MCF 10A (cell line): ENCODE measurements at regions of chr11 and their contacts with region 1.

Region 1: DNA sequence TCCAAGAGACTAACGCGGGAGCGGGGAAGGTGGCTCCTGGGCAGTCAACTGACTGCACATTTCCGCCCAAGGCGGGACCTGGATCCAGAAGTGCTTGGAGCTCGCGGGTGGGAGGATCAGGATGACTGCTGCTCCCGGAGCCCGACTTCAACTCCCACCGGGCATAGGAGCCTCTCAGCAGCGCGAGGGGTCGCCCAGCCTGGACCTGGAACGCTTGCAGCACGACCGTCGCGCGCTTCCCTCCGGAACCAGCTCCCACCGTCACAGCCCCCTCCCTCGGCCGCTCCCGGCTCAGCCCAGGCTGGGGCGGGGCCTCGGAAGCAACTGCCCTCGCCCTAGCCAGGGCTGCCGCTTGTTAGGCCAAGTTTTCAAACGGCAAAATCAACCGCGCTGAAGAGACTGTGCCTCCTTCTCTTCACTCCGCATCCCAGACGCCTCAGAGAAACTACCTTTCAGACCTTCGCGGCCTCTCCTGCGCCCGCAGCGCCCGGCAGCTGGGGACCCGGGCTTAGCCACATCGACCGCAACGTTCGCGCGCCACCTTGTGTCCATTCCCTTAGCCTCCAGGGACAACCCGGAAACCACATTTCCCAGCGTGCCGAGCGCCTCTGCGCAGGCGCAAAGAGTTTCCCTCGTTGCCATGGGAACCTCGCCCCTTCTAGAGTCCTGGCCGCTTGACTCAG is 14.0 kb downstream of the SSH3 start:
- DNase-seq: peak; percentile 97
- H3K4me3 Mint-ChIP-seq: peak overlapping the region; percentile 99
- H3K27ac Mint-ChIP-seq: peak overlapping the region; percentile 93
- H3K4me1 Mint-ChIP-seq: peaks cover 28% of the 10 kb centered on the region
- H3K27me3 Mint-ChIP-seq: no peaks in the 10 kb centered on the region
- CTCF ChIP-seq: peak; percentile 87

Region 2: GRCh38 chr11:67213178-67213621 is 104.1 kb before region 1 on chr11:
- CTCF ChIA-PET with region 1: no interaction called
- POLR2A ChIA-PET with region 1: no interaction called
- intact Hi-C with region 1: no loop called
- DNase-seq: no peak
- H3K4me3 Mint-ChIP-seq: no peak overlapping the region
- H3K27ac Mint-ChIP-seq: no peak overlapping the region
- H3K4me1 Mint-ChIP-seq: no peaks in the 10 kb centered on the region
- H3K27me3 Mint-ChIP-seq: no peaks in the 10 kb centered on the region
- CTCF ChIP-seq: no peak

Region 3: DNA sequence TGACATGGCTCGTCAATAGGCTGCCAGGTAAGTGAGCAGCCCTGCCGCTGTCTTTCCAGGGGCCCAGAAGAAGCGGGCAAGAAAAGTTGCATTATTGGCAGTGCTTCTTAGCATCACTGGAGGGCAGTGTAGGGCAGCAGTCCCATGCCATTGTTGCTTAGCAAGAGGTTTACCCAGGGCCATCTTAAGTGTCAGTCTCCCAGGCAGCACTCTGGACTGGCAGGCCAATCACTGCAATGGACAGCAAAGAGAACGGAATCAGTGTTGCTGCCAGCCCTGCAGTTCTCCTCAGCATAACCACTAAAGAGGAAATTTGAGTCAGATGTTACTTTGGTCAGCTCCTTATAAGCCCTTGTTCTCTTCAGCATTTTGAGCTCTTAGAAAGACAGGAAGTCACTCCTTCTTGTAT is 64.5 kb before region 1 on chr11:
- CTCF ChIA-PET with region 1: interaction called, 23 read pairs
- POLR2A ChIA-PET with region 1: interaction called, 3 read pairs
- intact Hi-C with region 1: no loop called
- DNase-seq: peak; percentile 46
- H3K4me3 Mint-ChIP-seq: no peak overlapping the region
- H3K27ac Mint-ChIP-seq: peak overlapping the region; percentile 37
- H3K4me1 Mint-ChIP-seq: peaks cover 15% of the 10 kb centered on the region
- H3K27me3 Mint-ChIP-seq: no peaks in the 10 kb centered on the region
- CTCF ChIP-seq: peak; percentile 18

Region 4: DNA sequence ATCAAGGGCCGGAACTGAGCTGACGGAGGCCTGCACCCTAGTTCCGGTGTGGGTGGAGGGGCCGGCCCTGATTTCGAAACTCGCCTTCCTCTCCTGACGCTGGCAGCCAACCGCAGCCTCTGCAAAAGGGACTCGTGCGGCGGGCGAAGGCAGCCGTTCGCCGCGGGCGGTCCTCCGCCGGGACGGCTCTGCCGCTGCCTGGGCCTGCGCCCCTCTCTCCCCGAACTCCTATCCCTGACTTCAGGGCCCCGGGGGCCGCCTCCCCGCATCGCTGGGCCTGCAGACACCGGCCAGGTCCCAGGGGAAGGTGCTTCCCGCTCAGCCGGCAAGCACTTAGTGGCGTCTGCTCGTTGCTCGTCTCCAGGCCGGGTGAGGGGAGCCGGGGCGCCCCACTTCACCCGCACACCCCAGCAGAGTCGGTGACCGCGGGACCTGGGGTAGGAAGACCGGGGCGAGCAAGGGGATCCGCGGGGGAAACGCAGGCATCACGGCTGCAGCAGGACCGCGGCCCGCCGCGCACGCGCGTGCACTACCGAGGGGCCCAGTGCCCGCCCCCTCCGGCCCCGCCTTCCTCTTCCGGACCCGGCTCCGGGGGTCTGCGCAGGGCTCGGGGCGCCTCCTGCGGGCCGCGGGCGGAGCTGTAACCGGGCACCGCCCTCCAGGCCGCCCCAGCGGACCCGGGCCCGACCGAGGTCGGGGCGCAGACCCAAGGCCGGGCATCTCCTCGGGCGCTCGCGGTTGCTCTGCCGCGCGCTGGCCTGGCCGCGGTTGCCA is 28.7 kb before region 1 on chr11:
- CTCF ChIA-PET with region 1: interaction called, 7 read pairs
- POLR2A ChIA-PET with region 1: interaction called, 27 read pairs
- intact Hi-C with region 1: no loop called
- DNase-seq: peak; percentile 92
- H3K4me3 Mint-ChIP-seq: peak overlapping the region; percentile 92
- H3K27ac Mint-ChIP-seq: peak overlapping the region; percentile 96
- H3K4me1 Mint-ChIP-seq: peaks cover 23% of the 10 kb centered on the region
- H3K27me3 Mint-ChIP-seq: no peaks in the 10 kb centered on the region
- CTCF ChIP-seq: peak; percentile 11

Region 5: DNA sequence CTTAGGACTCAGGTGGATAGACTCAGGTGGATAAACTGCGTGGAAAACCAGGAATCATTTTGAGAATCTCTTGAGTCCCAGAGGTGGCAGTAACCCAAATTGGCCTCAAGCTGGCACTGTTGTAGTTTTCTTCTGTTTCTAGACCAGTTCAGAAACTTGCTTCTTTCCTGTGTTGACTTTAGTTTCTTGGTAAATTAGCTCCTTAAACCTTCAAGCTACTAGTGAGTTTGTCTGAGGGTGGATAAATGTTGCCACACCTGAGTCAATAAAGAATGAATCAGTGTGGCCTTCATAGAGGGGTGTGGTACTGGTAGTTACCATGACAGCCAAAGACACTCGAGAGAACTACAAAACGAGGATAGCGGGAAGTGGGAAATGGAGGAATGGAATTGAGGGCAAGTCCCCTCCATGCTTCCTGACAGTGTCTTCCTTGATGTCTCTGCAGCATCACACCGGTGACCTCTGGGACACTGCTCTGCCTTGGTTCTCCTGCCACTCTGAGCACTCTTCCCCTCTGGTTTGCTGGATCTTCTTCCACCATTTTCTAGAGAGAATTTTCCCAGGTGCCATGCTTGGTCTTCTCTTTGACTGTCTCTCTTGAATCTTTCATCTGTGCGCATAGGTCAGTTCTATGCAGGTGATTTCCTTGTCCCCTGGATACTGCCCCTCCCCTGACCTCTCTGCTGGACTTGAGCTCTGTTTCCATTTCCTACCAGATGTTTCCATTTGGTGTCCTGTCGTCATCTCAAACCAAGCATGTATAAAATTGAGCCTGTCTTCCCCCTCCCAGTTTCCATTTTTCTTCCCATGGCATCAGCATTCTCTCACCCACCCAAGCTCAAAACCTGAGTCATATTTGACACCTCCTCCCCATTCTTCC is 28.8 kb after region 1 on chr11:
- CTCF ChIA-PET with region 1: interaction called, 21 read pairs
- POLR2A ChIA-PET with region 1: interaction called, 28 read pairs
- intact Hi-C with region 1: no loop called
- DNase-seq: peak; percentile 92
- H3K4me3 Mint-ChIP-seq: peak overlapping the region; percentile 42
- H3K27ac Mint-ChIP-seq: peak overlapping the region; percentile 97
- H3K4me1 Mint-ChIP-seq: peaks cover 37% of the 10 kb centered on the region
- H3K27me3 Mint-ChIP-seq: no peaks in the 10 kb centered on the region
- CTCF ChIP-seq: peak; percentile 57

Region 6: DNA sequence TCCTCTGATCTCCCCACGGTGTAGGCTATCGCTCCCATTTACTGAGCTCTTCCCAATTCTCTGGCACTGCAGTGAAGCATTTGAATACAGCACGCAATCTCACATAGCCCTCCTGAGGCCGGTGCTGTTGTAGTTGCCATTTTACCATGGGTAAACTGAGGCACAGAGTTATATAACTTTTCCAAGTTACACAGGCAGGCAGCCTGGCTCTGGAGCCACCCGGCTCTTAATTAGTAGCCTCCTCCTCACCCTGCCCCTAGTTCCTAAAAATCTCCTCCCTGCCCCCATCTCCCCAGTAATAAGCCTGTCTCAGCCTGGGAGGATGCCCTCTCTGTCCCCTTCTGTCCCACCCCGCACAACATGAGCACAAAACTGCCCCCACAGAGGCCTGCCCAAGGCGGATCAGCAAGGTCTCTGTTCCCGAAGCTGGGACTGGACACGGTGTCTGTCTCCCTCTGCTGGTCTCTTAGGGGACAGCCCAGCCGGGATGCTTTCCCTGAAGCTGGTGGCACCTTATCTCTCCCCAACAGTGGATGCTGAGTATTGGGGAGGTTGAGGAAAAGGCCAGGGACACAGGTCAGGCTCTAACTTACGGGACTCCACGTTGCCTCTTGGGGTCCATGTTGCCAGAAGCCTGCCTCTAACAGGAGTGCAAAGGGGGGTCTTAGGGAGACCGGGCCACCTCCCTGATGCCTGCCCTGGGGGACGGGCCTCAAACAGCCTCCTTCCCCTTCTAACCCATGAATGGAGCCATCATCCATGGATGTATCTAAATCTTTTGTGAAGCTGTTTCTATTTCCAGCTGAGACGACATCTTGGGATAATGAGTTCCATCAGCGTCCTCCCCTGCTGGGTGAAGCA is 65.2 kb after region 1 on chr11:
- CTCF ChIA-PET with region 1: interaction called, 15 read pairs
- POLR2A ChIA-PET with region 1: interaction called, 9 read pairs
- intact Hi-C with region 1: loop called (anchors 1 kb)
- DNase-seq: peak; percentile 83
- H3K4me3 Mint-ChIP-seq: no peak overlapping the region
- H3K27ac Mint-ChIP-seq: peak overlapping the region; percentile 6
- H3K4me1 Mint-ChIP-seq: peaks cover 41% of the 10 kb centered on the region
- H3K27me3 Mint-ChIP-seq: no peaks in the 10 kb centered on the region
- CTCF ChIP-seq: peak; percentile 97